ENCODE measurements at regions of chr3 and their contacts with region 1.

Region 1: GRCh38 chr3:30199096-30199759 is 407.2 kb upstream of the TGFBR2 start:
- DNase-seq: peak; percentile 85
- ATAC-seq: peak; percentile 75

Region 2: DNA sequence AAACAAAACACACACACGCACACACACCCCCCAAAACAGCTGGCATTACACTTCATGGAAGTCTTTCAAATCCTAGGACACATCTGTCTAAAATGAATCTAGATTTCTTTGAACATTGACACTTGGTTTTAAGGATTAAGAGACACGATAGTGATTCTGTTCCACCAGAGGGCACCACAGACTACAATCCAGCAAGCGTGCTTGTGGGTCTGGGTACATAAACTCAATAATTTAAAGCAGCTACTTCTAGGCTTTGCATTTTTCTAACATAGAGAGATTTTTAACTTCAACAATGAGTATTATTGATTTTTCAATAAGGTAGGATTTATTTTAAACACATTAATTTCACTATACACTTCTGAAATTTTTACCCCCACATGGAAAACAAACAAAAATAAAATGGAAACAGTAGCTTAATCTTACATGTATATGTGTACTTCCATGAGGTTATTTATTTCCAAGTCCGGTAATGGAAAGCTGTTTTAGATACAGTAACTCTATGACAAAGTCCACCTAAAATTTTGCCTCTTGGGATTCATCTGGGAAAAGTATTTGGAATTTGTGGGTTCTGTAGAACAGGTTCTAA is 156.9 kb before region 1 on chr3:
- intact Hi-C with region 1: loop called (anchors 5 kb)
- DNase-seq: peak; percentile 29
- ATAC-seq: peak; percentile 73

Region 3: GRCh38 chr3:30112902-30113484 is 86.2 kb before region 1 on chr3:
- intact Hi-C with region 1: loop called (anchors 5 kb)
- DNase-seq: no peak
- ATAC-seq: peak; percentile 29

Region 4: DNA sequence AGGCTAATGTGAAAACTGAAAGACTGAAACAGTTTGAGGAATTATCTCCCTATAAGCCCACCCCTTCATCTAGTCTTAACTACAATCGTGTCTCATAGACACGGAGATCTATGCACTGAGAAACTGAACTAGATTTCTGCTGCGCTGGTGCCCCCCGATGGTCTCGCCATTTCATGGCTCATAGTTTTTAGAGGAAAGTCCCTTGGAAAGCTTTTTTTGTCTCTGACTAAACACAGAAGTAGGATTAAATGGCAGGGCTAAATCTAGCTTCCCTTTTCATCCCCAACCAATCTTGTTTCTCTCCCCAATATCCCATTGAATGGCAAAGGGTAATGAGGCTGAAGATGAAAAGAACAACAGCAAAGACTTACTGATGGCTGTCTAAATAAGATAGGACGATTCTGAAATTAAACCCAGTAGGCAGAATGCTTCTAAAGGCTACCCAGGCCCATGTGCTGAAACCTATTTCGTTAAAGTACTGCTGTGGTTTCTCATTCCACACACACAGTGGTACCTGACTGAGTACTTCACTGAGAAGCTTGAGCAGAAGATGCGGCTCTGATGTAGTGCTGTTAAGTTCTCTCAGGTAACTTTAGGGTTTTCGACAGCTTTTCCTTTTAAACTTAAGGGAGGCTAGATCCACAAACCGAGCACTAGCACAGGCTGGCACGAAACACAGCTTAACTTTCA is 552.5 kb after region 1 on chr3:
- intact Hi-C with region 1: loop called (anchors 5 kb)
- DNase-seq: peak; percentile 57
- ATAC-seq: peak; percentile 65

Measured in left ventricle myocardium superior (tissue), 1 donor.